ENCODE measurements at regions of chr7 and their contacts with region 1.

Region 1: GRCh38 chr7:77326696-77327628 is 89.2 kb downstream of the GSAP start:
- DNase-seq: peak; percentile 41
- ATAC-seq: peak; percentile 46 to 55

Region 2: DNA sequence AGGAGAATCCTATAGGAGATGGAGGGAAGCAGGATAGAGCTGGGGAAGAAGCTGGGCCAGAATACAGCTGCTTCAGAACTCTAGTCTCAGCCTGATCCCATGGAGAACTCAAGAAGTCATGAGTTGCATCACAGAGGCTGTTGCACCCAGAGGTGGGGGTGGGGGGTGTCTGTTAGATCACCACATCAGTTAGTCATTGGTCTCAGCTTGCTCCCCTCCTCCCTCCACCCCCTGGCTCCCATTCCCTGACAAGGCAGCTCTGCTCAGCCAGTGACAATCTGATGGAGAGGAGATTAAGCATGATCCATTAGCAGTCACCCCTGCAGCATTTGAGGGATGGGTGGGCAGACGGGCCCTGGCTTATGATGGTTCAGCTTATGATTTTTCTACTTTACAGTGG is 68.9 kb before region 1 on chr7:
- intact Hi-C with region 1: loop called (anchors 5 kb)
- DNase-seq: no peak
- ATAC-seq: peak in 1 of 2 donors; percentile 64

Measured in left cardiac atrium (tissue), 4 donors.